ENCODE measurements at regions of chr14 and their contacts with region 1.

Region 1: GRCh38 chr14:68911594-68912227 is 67.4 kb downstream of the ACTN1 start:
- DNase-seq: peak; percentile 87
- ATAC-seq: peak; percentile 91
- H3K4me3 Mint-ChIP-seq: no peak overlapping the region
- H3K27ac Mint-ChIP-seq: peak overlapping the region; percentile 58
- H3K4me1 Mint-ChIP-seq: peaks cover 37% of the 10 kb centered on the region
- H3K27me3 Mint-ChIP-seq: no peaks in the 10 kb centered on the region

Region 2: DNA sequence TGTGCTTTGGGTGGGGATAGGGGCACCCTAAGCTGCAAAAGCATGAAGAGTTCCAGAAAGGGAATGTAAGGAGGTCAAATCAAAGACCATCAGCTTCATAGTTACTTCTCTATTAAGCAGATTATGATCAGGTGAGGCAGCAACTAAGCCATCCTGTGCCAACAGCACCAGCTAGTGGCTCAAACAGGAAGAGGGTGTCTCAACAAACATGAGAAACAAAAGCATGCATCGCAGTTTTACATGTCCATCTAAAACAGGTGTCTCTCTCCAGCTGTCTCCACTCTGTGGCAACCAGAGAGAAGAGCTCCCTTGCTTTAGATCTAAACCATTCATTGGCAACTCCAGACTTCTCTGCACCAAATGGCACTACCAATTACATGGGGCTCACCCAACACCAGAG is 14.5 kb after region 1 on chr14:
- CTCF ChIA-PET with region 1: interaction called, 13 read pairs
- POLR2A ChIA-PET with region 1: no interaction called
- intact Hi-C with region 1: no loop called
- DNase-seq: peak; percentile 51
- ATAC-seq: no peak
- H3K4me3 Mint-ChIP-seq: no peak overlapping the region
- H3K27ac Mint-ChIP-seq: no peak overlapping the region
- H3K4me1 Mint-ChIP-seq: peaks cover 45% of the 10 kb centered on the region
- H3K27me3 Mint-ChIP-seq: no peaks in the 10 kb centered on the region

Region 3: DNA sequence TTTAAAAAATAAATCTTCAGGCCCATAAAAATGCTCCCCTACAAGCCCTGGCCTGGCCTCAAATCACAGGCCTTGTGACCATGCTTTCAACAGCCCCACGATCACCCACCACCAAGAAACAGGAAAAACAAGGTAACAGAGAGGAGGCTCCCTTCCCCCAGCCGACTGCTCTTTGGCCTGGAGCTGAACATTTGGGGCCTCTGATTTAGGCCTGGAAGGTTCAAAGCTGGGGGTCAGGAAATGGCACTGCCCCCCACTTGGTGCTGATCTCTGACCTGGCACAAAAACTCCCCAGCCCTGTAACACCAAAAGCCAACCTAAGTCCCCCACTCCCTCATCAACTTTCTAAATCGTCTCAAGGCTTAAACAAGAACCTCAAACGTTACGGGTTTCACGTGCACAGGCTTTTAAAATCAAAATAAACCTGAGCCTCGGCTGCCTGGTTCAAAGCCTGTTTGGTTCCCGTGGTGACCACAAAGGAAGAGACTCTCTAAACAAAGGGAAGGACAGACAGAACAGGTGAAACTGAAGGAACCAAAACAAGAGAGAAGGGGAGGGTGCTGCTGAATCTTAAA is 58.4 kb after region 1 on chr14:
- CTCF ChIA-PET with region 1: interaction called, 22 read pairs
- POLR2A ChIA-PET with region 1: no interaction called
- intact Hi-C with region 1: no loop called
- DNase-seq: peak; percentile 31
- ATAC-seq: peak; percentile 40
- H3K4me3 Mint-ChIP-seq: peak overlapping the region; percentile 12
- H3K27ac Mint-ChIP-seq: peak overlapping the region; percentile 94
- H3K4me1 Mint-ChIP-seq: peaks cover 81% of the 10 kb centered on the region
- H3K27me3 Mint-ChIP-seq: no peaks in the 10 kb centered on the region

Region 4: DNA sequence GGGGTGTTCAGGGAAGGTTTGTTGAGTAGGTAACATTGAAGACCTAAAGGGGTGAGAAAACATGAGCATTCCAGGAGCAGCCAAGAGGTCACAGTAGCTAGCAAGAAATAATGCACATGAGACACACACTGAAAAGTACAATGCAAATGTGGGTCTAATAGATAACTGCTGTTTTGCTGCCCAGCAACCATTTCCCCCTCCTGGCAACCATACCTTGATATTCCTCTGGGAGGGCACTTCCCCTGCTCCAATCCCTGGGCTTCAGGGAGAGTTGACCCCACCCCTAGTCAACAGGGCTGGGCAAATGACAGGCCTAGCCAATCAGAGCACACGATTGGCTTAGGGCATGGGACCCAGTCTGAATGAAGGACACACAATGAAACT is 75.9 kb after region 1 on chr14:
- CTCF ChIA-PET with region 1: interaction called, 5 read pairs
- POLR2A ChIA-PET with region 1: no interaction called
- intact Hi-C with region 1: loop called (anchors 2 kb)
- DNase-seq: no peak
- ATAC-seq: no peak
- H3K4me3 Mint-ChIP-seq: no peak overlapping the region
- H3K27ac Mint-ChIP-seq: peak overlapping the region; percentile 35
- H3K4me1 Mint-ChIP-seq: peaks cover 15% of the 10 kb centered on the region
- H3K27me3 Mint-ChIP-seq: no peaks in the 10 kb centered on the region

Region 5: DNA sequence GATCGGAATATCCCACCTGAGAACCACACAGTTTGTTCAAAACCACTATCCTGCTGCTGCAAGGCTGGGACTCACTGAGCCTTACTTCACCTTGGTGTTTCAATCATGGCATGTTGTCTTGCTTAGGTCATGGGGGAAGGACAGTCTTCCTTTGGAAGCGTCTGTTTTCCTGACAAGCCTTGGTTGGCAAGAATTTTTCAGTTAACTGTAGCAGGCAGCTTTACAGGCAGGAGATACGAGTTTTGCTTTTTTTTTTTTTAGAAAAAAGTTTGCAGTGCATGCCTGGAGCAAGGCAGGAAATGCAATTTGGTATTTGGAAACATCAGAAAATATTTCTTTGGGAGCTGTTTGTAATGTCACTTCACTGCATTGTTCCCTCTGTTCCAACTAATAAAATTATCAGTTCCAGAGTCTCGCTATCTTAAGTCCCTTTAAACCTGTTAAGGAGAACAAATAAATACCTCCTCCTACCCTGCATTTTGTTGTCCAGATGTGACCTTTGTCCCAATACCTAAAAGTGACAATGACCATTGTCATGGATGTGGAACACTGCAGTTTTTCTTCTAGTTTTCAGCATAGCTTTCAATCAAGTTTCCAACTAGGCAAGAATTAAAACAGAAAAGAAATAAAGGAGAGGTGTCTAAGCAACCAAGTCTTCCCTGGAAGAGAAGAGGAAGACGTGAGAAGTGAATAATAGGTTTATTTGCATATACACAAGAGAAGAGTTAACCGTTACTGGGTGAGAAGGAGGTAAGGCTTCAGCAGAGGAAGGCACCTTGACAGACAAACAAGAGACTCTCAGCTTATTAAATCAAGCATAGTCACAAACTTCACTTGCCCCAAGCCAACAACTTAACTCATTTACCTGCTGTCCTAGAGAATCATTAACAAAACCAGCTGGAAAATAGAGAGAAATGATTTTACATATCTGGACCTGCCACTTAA is 138.8 kb after region 1 on chr14:
- CTCF ChIA-PET with region 1: interaction called, 10 read pairs
- POLR2A ChIA-PET with region 1: no interaction called
- intact Hi-C with region 1: no loop called
- DNase-seq: no peak
- ATAC-seq: no peak
- H3K4me3 Mint-ChIP-seq: no peak overlapping the region
- H3K27ac Mint-ChIP-seq: no peak overlapping the region
- H3K4me1 Mint-ChIP-seq: peaks cover 4% of the 10 kb centered on the region
- H3K27me3 Mint-ChIP-seq: no peaks in the 10 kb centered on the region

Region 6: DNA sequence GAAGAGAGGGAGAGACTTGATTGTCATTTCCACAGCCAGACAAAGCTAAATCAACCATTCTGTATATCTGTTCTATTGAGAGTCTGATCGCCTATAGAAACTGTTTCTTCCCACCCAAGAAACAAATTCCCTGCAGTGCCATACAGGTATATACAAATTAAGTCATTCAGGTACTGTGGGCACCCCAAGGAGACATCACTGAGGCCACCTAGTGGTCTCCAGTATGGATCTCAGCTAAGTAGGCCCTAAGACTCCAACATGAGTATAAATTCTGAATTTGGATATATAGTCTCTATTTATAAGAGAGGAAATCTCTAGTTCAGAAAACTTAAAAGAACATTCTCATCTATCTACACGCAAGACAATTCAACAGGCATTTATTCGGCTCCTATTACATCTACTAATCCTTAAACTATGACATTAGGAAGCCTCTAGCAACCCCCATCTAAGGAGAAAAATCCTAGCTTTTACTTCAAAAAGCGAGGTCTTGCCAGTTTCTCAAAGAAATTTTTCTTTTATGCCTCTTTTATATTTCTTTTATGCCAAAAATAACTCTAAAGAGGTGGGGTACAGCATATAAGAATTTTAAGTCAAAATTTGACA is 178.6 kb after region 1 on chr14:
- CTCF ChIA-PET with region 1: interaction called, 40 read pairs
- POLR2A ChIA-PET with region 1: no interaction called
- intact Hi-C with region 1: loop called (anchors 1 kb)
- DNase-seq: peak; percentile 44
- ATAC-seq: peak; percentile 77
- H3K4me3 Mint-ChIP-seq: no peak overlapping the region
- H3K27ac Mint-ChIP-seq: no peak overlapping the region
- H3K4me1 Mint-ChIP-seq: peaks cover 13% of the 10 kb centered on the region
- H3K27me3 Mint-ChIP-seq: no peaks in the 10 kb centered on the region

Region 7: DNA sequence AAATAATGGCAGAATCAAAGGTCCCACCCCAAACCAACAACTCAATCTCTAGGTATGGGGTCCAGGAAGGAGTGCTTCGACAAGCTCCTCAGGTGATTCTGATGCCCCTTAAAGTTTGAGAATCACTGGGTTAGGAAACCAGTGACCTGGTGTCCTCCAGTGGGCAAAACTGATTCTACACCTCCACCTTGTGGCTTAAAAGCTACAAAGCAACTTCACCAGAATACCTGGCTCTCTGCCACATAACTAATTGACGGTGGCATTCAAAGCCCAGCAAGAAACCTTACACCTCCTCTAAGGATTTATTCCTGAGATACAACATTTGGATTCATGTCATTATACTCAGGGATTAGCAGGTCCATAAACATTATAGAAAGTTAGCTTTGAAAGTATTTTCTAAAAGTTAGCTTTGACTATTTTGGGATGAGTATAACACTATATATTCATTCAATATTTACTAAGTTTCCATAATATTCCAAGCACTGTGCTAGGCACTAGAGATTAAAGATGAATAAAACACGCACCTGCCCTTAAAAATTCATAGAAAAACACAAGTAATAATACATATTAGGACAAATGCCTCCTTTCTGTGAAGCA is 195.8 kb after region 1 on chr14:
- CTCF ChIA-PET with region 1: interaction called, 70 read pairs
- POLR2A ChIA-PET with region 1: interaction called, 3 read pairs
- intact Hi-C with region 1: loop called (anchors 1 kb)
- DNase-seq: peak; percentile 34
- ATAC-seq: peak; percentile 78
- H3K4me3 Mint-ChIP-seq: no peak overlapping the region
- H3K27ac Mint-ChIP-seq: no peak overlapping the region
- H3K4me1 Mint-ChIP-seq: peaks cover 3% of the 10 kb centered on the region
- H3K27me3 Mint-ChIP-seq: no peaks in the 10 kb centered on the region

Region 8: DNA sequence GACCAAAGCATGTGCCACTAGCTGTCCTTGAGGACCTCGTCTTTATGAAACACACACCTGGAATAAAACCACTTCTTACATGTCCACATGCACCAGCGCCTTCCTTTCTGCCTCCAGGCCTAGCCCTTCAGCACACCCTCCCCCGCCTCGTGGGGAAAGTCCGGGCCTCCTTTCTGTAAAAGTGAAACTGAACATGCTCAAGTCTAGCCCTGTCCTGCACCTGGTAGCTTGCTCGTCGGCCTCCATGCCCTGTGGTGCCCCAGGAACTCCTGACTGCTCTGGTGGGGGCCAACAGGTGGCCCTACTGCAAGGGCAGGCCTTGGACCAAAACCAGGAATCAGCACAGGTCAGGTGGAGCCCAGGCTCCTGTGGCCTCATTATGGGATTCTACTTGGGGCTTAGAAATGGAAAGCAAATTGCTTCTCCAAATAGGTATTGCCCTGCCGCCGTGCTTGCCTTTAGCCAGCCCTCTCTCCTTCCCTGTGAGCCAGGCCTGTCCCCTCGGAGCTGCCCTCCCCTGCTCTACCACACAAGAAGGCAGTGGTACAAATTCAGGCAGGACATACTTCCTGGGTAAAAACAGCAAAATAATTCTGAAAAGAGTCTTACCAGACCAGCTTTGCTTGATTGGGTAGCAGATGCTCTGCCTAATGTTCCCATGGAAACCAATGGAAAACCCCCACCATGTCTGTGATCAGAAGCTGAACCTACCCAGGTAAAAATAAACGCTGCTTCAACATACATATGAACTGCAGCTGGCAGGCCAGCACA is 442.9 kb after region 1 on chr14:
- CTCF ChIA-PET with region 1: no interaction called
- POLR2A ChIA-PET with region 1: no interaction called
- intact Hi-C with region 1: no loop called
- DNase-seq: peak; percentile 82
- ATAC-seq: peak; percentile 73
- H3K4me3 Mint-ChIP-seq: peak overlapping the region; percentile 31
- H3K27ac Mint-ChIP-seq: peak overlapping the region; percentile 79
- H3K4me1 Mint-ChIP-seq: peaks cover 33% of the 10 kb centered on the region
- H3K27me3 Mint-ChIP-seq: peaks cover 3% of the 10 kb centered on the region